ENCODE measurements at regions of chr13 and their contacts with region 1.

Region 1: GRCh38 chr13:46146899-46147298 is 35.1 kb downstream of the LCP1 start:
- DNase-seq: no peak
- ATAC-seq: peak; percentile 65; the same call in 1 of the 2 replicates
- H3K4me3 ChIP-seq: no peak overlapping the region
- H3K27ac ChIP-seq: no peak overlapping the region
- H3K4me1 ChIP-seq: no peaks in the 10 kb centered on the region
- H3K27me3 ChIP-seq: peaks cover 13% of the 10 kb centered on the region; the same call in 1 of the 2 replicates
- CTCF ChIP-seq: peak; percentile 19 to 37 (median 30); a peak in 5 of 6 replicates
- POLR2A ChIP-seq: no peak
- RAD21 ChIP-seq: peak; percentile 51

Region 2: DNA sequence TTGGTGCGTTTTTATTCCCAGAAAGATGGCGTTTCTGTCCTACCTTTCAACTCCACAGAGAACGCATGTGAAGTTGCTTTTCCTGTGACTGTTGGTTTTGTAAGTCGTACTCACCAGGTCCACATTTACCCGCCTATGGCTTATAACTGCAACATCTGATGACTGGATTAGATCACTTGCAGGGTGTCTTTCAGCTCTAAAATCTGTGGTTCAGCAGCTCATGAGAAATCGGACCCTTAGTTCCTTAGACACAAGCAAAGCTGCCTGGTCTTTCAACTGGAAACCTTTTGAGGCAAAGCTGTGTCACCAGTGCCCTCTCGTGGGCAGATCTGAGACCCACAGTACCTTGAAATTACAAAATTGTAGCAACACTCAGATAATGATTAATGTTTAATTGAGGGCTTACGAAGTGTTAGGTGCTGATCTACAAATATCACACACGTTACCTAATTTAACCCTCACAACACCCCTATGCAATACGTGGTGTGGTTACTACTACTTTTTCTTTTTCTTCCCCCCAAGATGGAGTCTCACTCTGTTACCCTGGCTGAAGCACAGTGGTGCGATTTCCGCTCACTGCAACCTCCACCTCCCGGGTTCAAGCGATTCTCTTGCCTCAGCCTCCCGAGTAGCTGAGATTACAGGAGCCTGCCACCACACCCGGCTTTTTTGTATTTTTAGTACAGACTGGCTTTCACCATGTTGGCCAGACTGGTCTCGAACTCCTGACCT is 174.8 kb after region 1 on chr13:
- CTCF ChIA-PET with region 1: no interaction called
- POLR2A ChIA-PET with region 1: no interaction called
- RAD21 ChIA-PET with region 1: no interaction called
- intact Hi-C with region 1: loop called (anchors 2 kb)
- DNase-seq: peak; percentile 39
- ATAC-seq: peak; percentile 85
- H3K4me3 ChIP-seq: no peak overlapping the region
- H3K27ac ChIP-seq: no peak overlapping the region
- H3K4me1 ChIP-seq: no peaks in the 10 kb centered on the region
- H3K27me3 ChIP-seq: no peaks in the 10 kb centered on the region
- CTCF ChIP-seq: peak; percentile 68 to 85 (median 81); a peak in 5 of 6 replicates
- POLR2A ChIP-seq: no peak
- RAD21 ChIP-seq: peak; percentile 79

Region 3: GRCh38 chr13:47621931-47622330 is 1475.0 kb after region 1 on chr13:
- CTCF ChIA-PET with region 1: no interaction called
- POLR2A ChIA-PET with region 1: no interaction called
- RAD21 ChIA-PET with region 1: no interaction called
- intact Hi-C with region 1: no loop called
- DNase-seq: no peak
- ATAC-seq: no peak
- H3K4me3 ChIP-seq: no peak overlapping the region
- H3K27ac ChIP-seq: no peak overlapping the region
- H3K4me1 ChIP-seq: no peaks in the 10 kb centered on the region
- H3K27me3 ChIP-seq: peaks cover 22% of the 10 kb centered on the region; the same call in 1 of the 2 replicates
- CTCF ChIP-seq: no peak
- POLR2A ChIP-seq: no peak
- RAD21 ChIP-seq: no peak